ENCODE measurements at regions of chr1 and their contacts with region 1.

Region 1: DNA sequence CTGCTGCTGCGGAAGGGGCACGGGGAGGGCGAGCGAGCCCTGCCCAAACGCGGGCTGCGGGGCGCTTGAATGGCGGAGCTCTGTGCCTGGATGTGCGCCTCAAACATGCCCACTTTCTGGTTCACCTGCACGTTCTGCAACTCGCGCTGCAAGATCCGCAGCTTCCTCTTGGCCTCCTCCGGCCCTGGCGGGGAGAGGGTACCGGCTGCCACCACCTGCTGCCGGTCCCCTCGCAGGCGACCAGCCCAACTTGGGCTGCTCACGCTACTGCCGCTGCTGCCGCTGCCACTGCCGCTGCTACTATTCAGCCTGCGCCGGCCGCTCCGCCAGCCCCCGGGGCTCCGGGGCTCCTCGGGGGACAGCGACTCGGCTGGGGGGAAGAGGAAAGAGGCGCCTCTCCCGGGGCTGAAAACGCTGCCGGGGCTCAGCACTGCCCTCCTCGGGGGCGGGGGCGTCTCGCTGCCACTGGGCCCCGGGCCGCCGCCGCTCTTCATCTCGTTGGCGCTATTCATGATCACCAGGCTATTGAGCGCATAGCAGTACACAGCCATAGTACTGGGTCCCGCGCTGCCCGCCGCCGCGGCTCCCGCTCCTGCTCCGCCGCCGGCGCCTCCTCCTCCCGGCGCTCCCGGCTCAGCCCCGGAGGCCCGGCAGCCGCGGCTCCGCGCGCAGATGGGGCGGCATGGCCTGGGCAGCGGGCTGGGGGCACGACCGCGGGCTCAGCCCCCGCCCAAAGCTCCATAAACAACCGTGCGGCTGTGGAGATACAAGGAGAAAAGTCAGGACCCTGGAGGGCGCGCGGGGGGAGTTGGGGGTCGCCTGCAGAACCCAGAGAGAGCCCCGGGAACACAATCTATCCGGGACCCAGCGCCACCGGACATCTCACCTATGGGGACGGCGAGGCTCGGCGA is 1.9 kb downstream of the ITPKB start:
- DNase-seq: peak; percentile 42 to 49
- ATAC-seq: peak; percentile 5 to 62 (median 30)
- H3K4me3 ChIP-seq: peak overlapping the region; percentile 54 to 98 (median 82)
- H3K27ac ChIP-seq: peak overlapping the region; percentile 73 to 97 (median 91)
- H3K4me1 ChIP-seq: peaks cover 4 to 60% (median 55%) of the 10 kb centered on the region in 9 donors
- H3K27me3 ChIP-seq: no peaks in the 10 kb centered on the region
- CTCF ChIP-seq: peak in 4 of 9 donors; percentile 13 to 35 (median 17)

Region 2: GRCh38 chr1:226532553-226532952 is 204.6 kb before region 1 on chr1:
- intact Hi-C with region 1: no loop called
- DNase-seq: no peak
- ATAC-seq: no peak
- H3K4me3 ChIP-seq: no peak overlapping the region
- H3K27ac ChIP-seq: no peak overlapping the region
- H3K4me1 ChIP-seq: no peaks in the 10 kb centered on the region
- H3K27me3 ChIP-seq: no peaks in the 10 kb centered on the region
- CTCF ChIP-seq: no peak

Region 3: GRCh38 chr1:226634166-226634588 is 103.0 kb before region 1 on chr1:
- intact Hi-C with region 1: loop called in 4 of 10 experiments (anchors 2 to 10 kb)
- DNase-seq: peak; percentile 80 to 86
- ATAC-seq: peak; percentile 64 to 83 (median 79)
- H3K4me3 ChIP-seq: no peak overlapping the region
- H3K27ac ChIP-seq: peak overlapping the region in 8 of 10 donors; percentile 11 to 71 (median 40)
- H3K4me1 ChIP-seq: peaks cover 7 to 68% (median 40%) of the 10 kb centered on the region in 9 donors
- H3K27me3 ChIP-seq: no peaks in the 10 kb centered on the region
- CTCF ChIP-seq: peak; percentile 93 to 98 (median 95)

Region 4: GRCh38 chr1:226656601-226657277 is 80.4 kb before region 1 on chr1:
- intact Hi-C with region 1: loop called in 9 of 10 experiments (anchors 5 to 10 kb)
- DNase-seq: no peak
- ATAC-seq: peak in 1 of 8 donors; percentile 9
- H3K4me3 ChIP-seq: no peak overlapping the region
- H3K27ac ChIP-seq: peak overlapping the region in 6 of 10 donors; percentile 52 to 92 (median 77)
- H3K4me1 ChIP-seq: peaks cover 0 to 88% (median 0%) of the 10 kb centered on the region in 9 donors
- H3K27me3 ChIP-seq: no peaks in the 10 kb centered on the region
- CTCF ChIP-seq: no peak

Region 5: DNA sequence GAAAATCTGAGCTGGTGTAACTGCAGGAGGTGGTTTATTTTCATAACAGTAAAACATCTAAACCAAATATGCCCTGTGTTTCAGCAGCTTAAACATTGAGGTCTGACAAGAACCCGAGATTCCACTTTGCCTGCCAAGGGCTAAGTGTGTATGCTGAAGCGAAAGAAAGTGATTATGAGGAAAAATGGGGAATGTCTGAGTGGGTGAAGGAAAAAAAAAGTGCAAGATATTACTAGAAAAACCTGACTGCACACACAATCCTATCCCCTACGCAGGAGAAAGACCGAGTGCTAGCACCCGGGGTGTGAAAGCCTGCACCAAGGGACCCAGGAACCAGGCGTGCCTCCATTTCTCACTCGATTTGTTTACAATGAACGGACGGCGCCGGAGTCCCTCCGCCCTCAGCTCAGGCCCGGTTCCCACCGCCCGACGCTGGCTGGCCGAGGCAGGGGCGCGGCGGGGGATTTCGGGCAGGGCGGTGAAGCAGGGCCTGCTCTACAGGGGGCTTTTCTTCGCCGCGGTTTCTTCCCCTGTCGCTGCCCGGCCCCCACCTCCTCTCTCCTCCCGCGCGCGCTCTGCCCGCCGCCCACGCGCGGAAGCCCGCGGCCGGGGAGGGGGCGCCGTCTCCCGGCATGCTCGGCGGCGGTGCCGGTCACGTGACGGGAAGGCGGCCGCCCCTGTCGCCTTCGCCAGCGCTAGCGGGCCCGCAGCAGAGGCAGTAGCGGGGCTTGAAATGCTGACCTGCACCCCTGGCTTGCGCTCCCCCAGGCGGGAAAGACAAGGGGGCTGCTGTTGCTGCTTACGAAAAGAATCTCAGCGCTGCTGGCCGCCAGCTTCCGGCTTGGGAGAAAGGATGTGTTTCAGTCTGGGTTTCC is 34.0 kb before region 1 on chr1:
- intact Hi-C with region 1: loop called in 4 of 10 experiments (anchors 5 kb)
- DNase-seq: peak; percentile 78 to 82
- ATAC-seq: peak; percentile 85 to 92 (median 90)
- H3K4me3 ChIP-seq: peak overlapping the region; percentile 33 to 81 (median 70)
- H3K27ac ChIP-seq: peak overlapping the region; percentile 94 to 99 (median 96)
- H3K4me1 ChIP-seq: peaks cover 0 to 88% (median 48%) of the 10 kb centered on the region in 9 donors
- H3K27me3 ChIP-seq: no peaks in the 10 kb centered on the region
- CTCF ChIP-seq: no peak

Region 6: GRCh38 chr1:226820941-226821718 is 84.0 kb after region 1 on chr1:
- intact Hi-C with region 1: loop called in 9 of 10 experiments (anchors 2 to 10 kb)
- DNase-seq: peak; percentile 68 to 91
- ATAC-seq: peak; percentile 93 to 96 (median 94)
- H3K4me3 ChIP-seq: no peak overlapping the region
- H3K27ac ChIP-seq: peak overlapping the region; percentile 49 to 90 (median 74)
- H3K4me1 ChIP-seq: peaks cover 11 to 56% (median 27%) of the 10 kb centered on the region in 9 donors
- H3K27me3 ChIP-seq: no peaks in the 10 kb centered on the region
- CTCF ChIP-seq: no peak